Aorta (tissue), 5 donors: ENCODE measurements at regions of chr3 and their contacts with region 1.

Region 1: GRCh38 chr3:190094160-190094718 is 26.5 kb downstream of the P3H2 start:
- DNase-seq: peak in 1 of 2 donors; percentile 50
- ATAC-seq: peak; percentile 80
- H3K4me3 ChIP-seq: no peak overlapping the region
- H3K27ac ChIP-seq: peak overlapping the region; percentile 60 to 79
- H3K4me1 ChIP-seq: peaks cover 5% of the 10 kb centered on the region in 2 donors
- H3K27me3 ChIP-seq: no peaks in the 10 kb centered on the region

Region 2: DNA sequence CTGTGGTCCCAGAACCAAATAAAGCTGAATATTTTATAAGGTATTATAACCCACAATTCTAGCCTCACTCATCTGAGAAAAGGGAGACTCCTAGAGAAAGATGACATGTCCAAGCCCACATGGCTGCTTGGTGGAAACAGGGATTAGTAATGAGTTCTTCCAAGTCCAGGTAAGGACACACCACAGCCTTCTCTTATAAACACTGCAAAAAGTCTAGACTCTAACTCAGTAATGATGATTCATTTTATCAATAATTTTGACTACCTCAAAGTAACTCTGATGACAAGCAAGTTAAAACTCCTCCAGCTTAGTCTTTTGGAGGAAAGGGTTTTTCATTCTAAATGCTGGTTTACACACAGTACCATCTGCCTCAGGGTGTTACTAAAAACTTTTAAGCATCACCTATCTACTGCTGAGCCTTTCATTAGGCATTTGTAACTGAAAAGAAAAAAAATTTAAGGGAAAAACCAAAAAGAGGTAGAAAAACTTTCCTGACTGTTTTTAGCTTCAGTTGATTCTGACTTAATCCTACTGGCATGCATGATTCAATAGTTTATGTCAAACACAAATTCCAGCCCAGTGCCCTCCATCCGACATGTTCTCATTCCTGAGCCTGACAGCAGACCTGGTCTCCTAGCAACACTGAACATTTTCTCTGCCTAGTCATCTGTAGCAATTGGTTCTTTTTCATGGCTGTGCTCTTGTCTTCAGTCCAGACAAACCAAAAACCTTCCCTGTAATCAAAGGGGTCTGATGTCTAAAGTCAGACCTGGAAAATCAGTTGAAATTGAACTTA is 17.4 kb before region 1 on chr3:
- intact Hi-C with region 1: loop called in 1 of 2 experiments (anchors 2 kb)
- DNase-seq: peak; percentile 71 to 75
- ATAC-seq: peak; percentile 88
- H3K4me3 ChIP-seq: no peak overlapping the region
- H3K27ac ChIP-seq: peak overlapping the region; percentile 55 to 91
- H3K4me1 ChIP-seq: peaks cover 0 to 4% of the 10 kb centered on the region in 2 donors
- H3K27me3 ChIP-seq: no peaks in the 10 kb centered on the region

Region 3: DNA sequence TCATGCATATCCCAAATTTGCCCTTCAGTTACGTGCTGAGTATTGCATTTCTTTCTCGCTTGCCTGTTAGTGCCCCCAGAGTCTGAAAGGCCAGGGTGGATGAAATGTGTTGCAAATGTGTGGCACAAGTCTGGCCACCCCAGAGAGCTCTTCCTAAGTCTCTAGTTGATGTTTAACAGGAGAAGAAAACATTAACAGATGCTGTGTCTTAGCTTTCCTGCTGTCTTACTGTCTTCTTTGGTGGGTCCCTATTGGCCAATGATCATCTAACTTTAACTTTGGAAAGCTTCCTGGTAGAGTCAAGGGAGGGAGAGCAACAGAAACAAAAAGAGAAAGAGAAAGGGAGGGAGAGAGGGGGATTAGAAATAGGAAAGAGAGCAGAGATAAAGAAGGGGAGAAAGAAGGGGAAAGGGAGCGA is 103.1 kb after region 1 on chr3:
- intact Hi-C with region 1: no loop called
- DNase-seq: no peak
- ATAC-seq: no peak
- H3K4me3 ChIP-seq: no peak overlapping the region
- H3K27ac ChIP-seq: no peak overlapping the region
- H3K4me1 ChIP-seq: no peaks in the 10 kb centered on the region
- H3K27me3 ChIP-seq: no peaks in the 10 kb centered on the region

Region 4: DNA sequence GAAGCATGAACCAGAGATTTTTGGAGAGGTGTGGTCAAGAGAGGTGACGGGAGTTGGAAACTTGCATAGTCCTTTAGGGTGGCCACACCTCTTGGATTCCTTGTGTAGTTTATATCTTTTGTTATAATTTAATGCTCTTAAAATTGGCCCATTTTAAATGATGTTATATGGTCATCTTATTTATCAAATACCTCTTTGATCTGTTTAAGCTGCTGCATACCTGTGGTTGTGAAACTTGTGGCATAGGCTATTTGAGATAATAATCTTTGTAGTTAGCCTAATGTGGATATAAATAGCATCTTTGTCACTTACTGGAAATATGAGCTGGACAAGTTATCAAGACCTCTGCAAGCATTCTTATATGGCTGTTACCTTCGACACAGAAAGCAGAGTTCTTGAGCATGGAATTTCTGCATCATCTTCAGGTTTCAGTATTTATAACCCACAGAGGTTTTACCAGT is 468.8 kb after region 1 on chr3:
- intact Hi-C with region 1: no loop called
- DNase-seq: no peak
- ATAC-seq: no peak
- H3K4me3 ChIP-seq: no peak overlapping the region
- H3K27ac ChIP-seq: no peak overlapping the region
- H3K4me1 ChIP-seq: peaks cover 0 to under 1% of the 10 kb centered on the region in 2 donors
- H3K27me3 ChIP-seq: no peaks in the 10 kb centered on the region